CD8-positive, alpha-beta memory T cell (primary cell): ENCODE measurements at regions of chr17 and their contacts with region 1.

Region 1: GRCh38 chr17:45648642-45649041 is 135.5 kb upstream of the CRHR1 start:
- DNase-seq: no peak
- H3K4me3 ChIP-seq: no peak overlapping the region
- H3K4me3 Mint-ChIP-seq: no peak overlapping the region
- H3K27ac ChIP-seq: no peak overlapping the region
- H3K27ac Mint-ChIP-seq: no peak overlapping the region
- H3K4me1 ChIP-seq: peaks cover 8% of the 10 kb centered on the region
- H3K4me1 Mint-ChIP-seq: peaks cover 8 to 16% (median 11%) of the 10 kb centered on the region in 3 donors
- H3K27me3 ChIP-seq: no peaks in the 10 kb centered on the region
- H3K27me3 Mint-ChIP-seq: peaks cover 0 to 9% of the 10 kb centered on the region in 2 donors

Region 2: GRCh38 chr17:45660474-45660873 is 11.8 kb after region 1 on chr17:
- CTCF ChIA-PET with region 1: no interaction called
- POLR2A ChIA-PET with region 1: no interaction called
- DNase-seq: no peak
- H3K4me3 ChIP-seq: no peak overlapping the region
- H3K4me3 Mint-ChIP-seq: no peak overlapping the region
- H3K27ac ChIP-seq: no peak overlapping the region
- H3K27ac Mint-ChIP-seq: no peak overlapping the region
- H3K4me1 ChIP-seq: no peaks in the 10 kb centered on the region
- H3K4me1 Mint-ChIP-seq: peaks cover 0 to 11% (median 10%) of the 10 kb centered on the region in 3 donors
- H3K27me3 ChIP-seq: peaks cover 3% of the 10 kb centered on the region
- H3K27me3 Mint-ChIP-seq: peaks cover 23 to 49% of the 10 kb centered on the region in 2 donors

Region 3: DNA sequence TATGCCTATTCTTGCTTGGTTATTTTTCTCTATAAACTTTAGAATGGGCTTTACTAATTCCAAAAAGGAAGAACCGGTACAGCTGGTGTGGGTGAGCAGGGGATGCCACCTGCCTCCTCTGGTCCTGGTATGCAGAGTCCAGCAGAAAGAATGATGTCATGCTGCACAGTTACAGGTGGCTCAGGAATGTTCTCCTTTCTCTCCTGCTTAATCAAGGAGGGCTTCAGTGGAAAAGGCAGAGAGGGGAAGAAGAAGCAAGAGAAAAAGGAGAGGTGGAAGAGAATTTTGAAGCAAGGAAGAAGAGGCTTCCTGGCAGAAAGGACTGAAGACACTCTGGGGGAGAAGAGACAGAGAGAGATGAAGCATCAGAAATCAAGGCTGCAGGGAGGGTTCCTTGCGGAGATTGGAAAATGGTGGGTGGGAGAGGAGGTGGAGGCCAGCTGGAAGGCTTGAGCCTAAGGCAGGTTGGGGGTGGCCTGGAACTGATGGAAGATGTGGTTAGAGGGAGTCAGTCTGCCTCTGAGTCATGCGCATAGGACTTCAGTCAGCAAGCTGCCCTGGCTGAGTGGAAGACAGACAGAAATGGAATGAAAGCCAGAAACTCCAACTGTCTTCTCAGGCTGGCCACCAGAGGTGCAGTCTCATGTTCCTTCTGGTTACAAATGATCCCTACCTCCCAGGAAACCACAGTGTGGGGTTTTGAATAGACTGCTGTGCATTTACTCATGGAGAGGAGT is 70.9 kb after region 1 on chr17:
- CTCF ChIA-PET with region 1: no interaction called
- POLR2A ChIA-PET with region 1: no interaction called
- DNase-seq: no peak
- H3K4me3 ChIP-seq: no peak overlapping the region
- H3K4me3 Mint-ChIP-seq: no peak overlapping the region
- H3K27ac ChIP-seq: no peak overlapping the region
- H3K27ac Mint-ChIP-seq: no peak overlapping the region
- H3K4me1 ChIP-seq: no peaks in the 10 kb centered on the region
- H3K4me1 Mint-ChIP-seq: no peaks in the 10 kb centered on the region
- H3K27me3 ChIP-seq: peaks cover 5% of the 10 kb centered on the region
- H3K27me3 Mint-ChIP-seq: peaks cover 32 to 48% of the 10 kb centered on the region in 2 donors

Region 4: GRCh38 chr17:45828628-45829027 is 180.0 kb after region 1 on chr17:
- CTCF ChIA-PET with region 1: interaction called, 12 read pairs
- POLR2A ChIA-PET with region 1: no interaction called
- DNase-seq: no peak
- H3K4me3 ChIP-seq: no peak overlapping the region
- H3K4me3 Mint-ChIP-seq: no peak overlapping the region
- H3K27ac ChIP-seq: no peak overlapping the region
- H3K27ac Mint-ChIP-seq: no peak overlapping the region
- H3K4me1 ChIP-seq: no peaks in the 10 kb centered on the region
- H3K4me1 Mint-ChIP-seq: peaks cover 0 to 7% (median 0%) of the 10 kb centered on the region in 3 donors
- H3K27me3 ChIP-seq: no peaks in the 10 kb centered on the region
- H3K27me3 Mint-ChIP-seq: peaks cover 9 to 16% of the 10 kb centered on the region in 2 donors